ENCODE measurements at regions of chr22 and their contacts with region 1.

Region 1: DNA sequence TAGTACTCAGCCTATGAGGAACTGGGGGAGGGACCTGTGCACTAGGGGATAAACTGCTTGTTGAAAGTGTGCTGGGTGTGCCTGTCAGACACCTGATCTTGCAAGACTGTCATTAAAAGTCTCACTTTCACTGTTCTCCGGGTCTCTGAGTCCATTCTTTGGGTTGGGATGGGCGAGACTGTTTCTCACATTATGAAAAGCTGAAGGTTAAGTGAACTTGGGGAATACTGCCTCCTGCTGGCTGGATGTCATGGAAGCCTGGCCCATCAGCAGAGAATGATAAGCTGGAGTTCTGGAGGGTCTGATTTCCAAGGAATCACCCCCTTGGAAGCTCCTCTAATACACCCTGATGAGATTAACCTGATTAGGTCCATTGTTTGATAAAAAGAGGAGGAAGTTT is 9.0 kb upstream of the VPREB1 start:
- DNase-seq: no peak
- ATAC-seq: no peak
- H3K4me3 Mint-ChIP-seq: peak overlapping the region; percentile 38
- H3K27ac Mint-ChIP-seq: no peak overlapping the region
- H3K4me1 Mint-ChIP-seq: peaks cover 25% of the 10 kb centered on the region
- H3K27me3 Mint-ChIP-seq: peaks cover 2% of the 10 kb centered on the region
- CTCF ChIP-seq: no peak

Region 2: GRCh38 chr22:21972293-21972779 is 263.2 kb before region 1 on chr22:
- CTCF ChIA-PET with region 1: interaction called, 11 read pairs
- POLR2A ChIA-PET with region 1: no interaction called
- intact Hi-C with region 1: no loop called
- DNase-seq: peak; percentile 56
- ATAC-seq: peak; percentile 77
- H3K4me3 Mint-ChIP-seq: no peak overlapping the region
- H3K27ac Mint-ChIP-seq: no peak overlapping the region
- H3K4me1 Mint-ChIP-seq: peaks cover 2% of the 10 kb centered on the region
- H3K27me3 Mint-ChIP-seq: no peaks in the 10 kb centered on the region
- CTCF ChIP-seq: peak; percentile 79

Region 3: GRCh38 chr22:22074634-22075381 is 160.8 kb before region 1 on chr22:
- CTCF ChIA-PET with region 1: no interaction called
- POLR2A ChIA-PET with region 1: no interaction called
- intact Hi-C with region 1: no loop called
- DNase-seq: no peak
- ATAC-seq: no peak
- H3K4me3 Mint-ChIP-seq: no peak overlapping the region
- H3K27ac Mint-ChIP-seq: no peak overlapping the region
- H3K4me1 Mint-ChIP-seq: peaks cover 8% of the 10 kb centered on the region
- H3K27me3 Mint-ChIP-seq: no peaks in the 10 kb centered on the region
- CTCF ChIP-seq: no peak

Region 4: DNA sequence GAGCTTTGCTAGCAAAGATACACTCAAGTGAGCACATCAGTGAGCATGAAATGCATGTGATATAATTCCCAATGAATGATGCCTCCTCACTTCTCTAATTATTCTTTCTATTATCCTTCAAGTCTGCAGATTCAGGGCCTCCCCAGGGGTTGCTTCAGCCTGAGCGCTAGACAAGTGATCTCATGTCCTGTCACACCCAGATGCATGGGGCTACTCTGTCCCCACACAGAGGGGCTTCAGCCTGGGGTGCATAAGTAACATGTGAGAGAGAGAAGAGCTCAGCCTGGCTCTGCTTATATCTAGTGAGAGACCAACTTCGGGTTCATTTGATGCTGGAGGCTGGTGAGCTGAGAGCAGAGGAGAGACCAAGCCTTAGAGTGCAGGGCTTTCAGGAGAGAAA is 94.2 kb after region 1 on chr22:
- CTCF ChIA-PET with region 1: no interaction called
- POLR2A ChIA-PET with region 1: no interaction called
- intact Hi-C with region 1: no loop called
- DNase-seq: no peak
- ATAC-seq: no peak
- H3K4me3 Mint-ChIP-seq: no peak overlapping the region
- H3K27ac Mint-ChIP-seq: no peak overlapping the region
- H3K4me1 Mint-ChIP-seq: peaks cover 34% of the 10 kb centered on the region
- H3K27me3 Mint-ChIP-seq: peaks cover 24% of the 10 kb centered on the region
- CTCF ChIP-seq: no peak

Region 5: GRCh38 chr22:22371031-22371541 is 135.5 kb after region 1 on chr22:
- CTCF ChIA-PET with region 1: no interaction called
- POLR2A ChIA-PET with region 1: no interaction called
- intact Hi-C with region 1: no loop called
- DNase-seq: no peak
- ATAC-seq: no peak
- H3K4me3 Mint-ChIP-seq: no peak overlapping the region
- H3K27ac Mint-ChIP-seq: no peak overlapping the region
- H3K4me1 Mint-ChIP-seq: peaks cover 89% of the 10 kb centered on the region
- H3K27me3 Mint-ChIP-seq: no peaks in the 10 kb centered on the region
- CTCF ChIP-seq: no peak

Region 6: GRCh38 chr22:22397277-22397870 is 161.8 kb after region 1 on chr22:
- CTCF ChIA-PET with region 1: no interaction called
- POLR2A ChIA-PET with region 1: no interaction called
- intact Hi-C with region 1: no loop called
- DNase-seq: no peak
- ATAC-seq: no peak
- H3K4me3 Mint-ChIP-seq: no peak overlapping the region
- H3K27ac Mint-ChIP-seq: peak overlapping the region; percentile 66
- H3K4me1 Mint-ChIP-seq: peaks cover 54% of the 10 kb centered on the region
- H3K27me3 Mint-ChIP-seq: no peaks in the 10 kb centered on the region
- CTCF ChIP-seq: no peak